H1 (cell line): ENCODE measurements at regions of chr3 and their contacts with region 1.

Region 1: GRCh38 chr3:46558184-46559043 is 7.7 kb downstream of the LRRC2 start:
- DNase-seq: peak in 1 of 2 experiments; percentile 57
- H3K4me3 ChIP-seq: peak overlapping the region in 1 of 4 experiments; percentile 13; a peak in 1 of 8 replicates
- H3K27ac ChIP-seq: no peak overlapping the region
- H3K4me1 ChIP-seq: peaks cover 3 to 12% (median 5%) of the 10 kb centered on the region in 4 experiments; a peak in 5 of 7 replicates
- H3K27me3 ChIP-seq: no peaks in the 10 kb centered on the region; a peak in 1 of 7 replicates
- CTCF ChIP-seq: peak; percentile 67 to 80 (median 71)
- EP300 ChIP-seq: no peak
- POLR2A ChIP-seq: no peak
- RAD21 ChIP-seq: peak; percentile 81 to 85

Region 2: DNA sequence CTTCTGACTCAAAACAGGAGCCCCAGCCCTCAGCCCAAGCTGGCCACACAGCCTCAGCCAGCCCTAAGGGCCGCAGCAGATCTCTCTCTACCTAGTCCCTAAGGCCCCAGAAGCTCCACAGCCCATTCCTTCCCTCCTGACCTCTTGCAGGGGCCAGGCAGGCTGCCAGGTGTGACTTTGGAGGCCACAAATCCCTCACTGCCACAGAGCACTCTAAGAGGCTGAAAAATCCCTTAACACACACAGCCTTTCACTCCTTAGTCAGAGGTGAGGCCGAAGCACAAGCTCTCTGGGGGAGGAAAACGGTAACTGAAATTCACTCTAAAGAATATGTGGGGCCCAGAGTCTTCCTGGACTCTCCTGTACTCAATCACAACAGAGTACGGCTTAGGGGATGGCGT is 15.6 kb before region 1 on chr3:
- CTCF ChIA-PET with region 1: interaction called, 15 read pairs
- POLR2A ChIA-PET with region 1: interaction called, 26 read pairs
- DNase-seq: no peak
- H3K4me3 ChIP-seq: no peak overlapping the region
- H3K27ac ChIP-seq: 0 out of 2 replicates have a peak overlapping the region, but pooled peaks have one; percentile 5
- H3K4me1 ChIP-seq: peaks cover 14 to 21% (median 18%) of the 10 kb centered on the region in 4 experiments
- H3K27me3 ChIP-seq: no peaks in the 10 kb centered on the region
- CTCF ChIP-seq: no peak
- EP300 ChIP-seq: no peak
- POLR2A ChIP-seq: no peak
- RAD21 ChIP-seq: no peak

Region 3: GRCh38 chr3:46571684-46572083 is 13.3 kb after region 1 on chr3:
- CTCF ChIA-PET with region 1: interaction called, 6 read pairs
- POLR2A ChIA-PET with region 1: interaction called, 101 read pairs
- DNase-seq: no peak
- H3K4me3 ChIP-seq: no peak overlapping the region
- H3K27ac ChIP-seq: peak overlapping the region; percentile 1; the same call in 1 of the 2 replicates
- H3K4me1 ChIP-seq: peaks cover 12 to 26% (median 17%) of the 10 kb centered on the region in 4 experiments; a peak in 6 of 7 replicates
- H3K27me3 ChIP-seq: no peaks in the 10 kb centered on the region
- CTCF ChIP-seq: no peak
- EP300 ChIP-seq: no peak
- POLR2A ChIP-seq: no peak
- RAD21 ChIP-seq: no peak